Aorta (tissue), 5 donors: ENCODE measurements at regions of chr3 and their contacts with region 1.

Region 1: GRCh38 chr3:171566803-171567422 is 106.7 kb upstream of the TNIK start:
- DNase-seq: no peak
- ATAC-seq: peak; percentile 74
- H3K4me3 ChIP-seq: no peak overlapping the region
- H3K27ac ChIP-seq: no peak overlapping the region
- H3K4me1 ChIP-seq: no peaks in the 10 kb centered on the region
- H3K27me3 ChIP-seq: no peaks in the 10 kb centered on the region

Region 2: DNA sequence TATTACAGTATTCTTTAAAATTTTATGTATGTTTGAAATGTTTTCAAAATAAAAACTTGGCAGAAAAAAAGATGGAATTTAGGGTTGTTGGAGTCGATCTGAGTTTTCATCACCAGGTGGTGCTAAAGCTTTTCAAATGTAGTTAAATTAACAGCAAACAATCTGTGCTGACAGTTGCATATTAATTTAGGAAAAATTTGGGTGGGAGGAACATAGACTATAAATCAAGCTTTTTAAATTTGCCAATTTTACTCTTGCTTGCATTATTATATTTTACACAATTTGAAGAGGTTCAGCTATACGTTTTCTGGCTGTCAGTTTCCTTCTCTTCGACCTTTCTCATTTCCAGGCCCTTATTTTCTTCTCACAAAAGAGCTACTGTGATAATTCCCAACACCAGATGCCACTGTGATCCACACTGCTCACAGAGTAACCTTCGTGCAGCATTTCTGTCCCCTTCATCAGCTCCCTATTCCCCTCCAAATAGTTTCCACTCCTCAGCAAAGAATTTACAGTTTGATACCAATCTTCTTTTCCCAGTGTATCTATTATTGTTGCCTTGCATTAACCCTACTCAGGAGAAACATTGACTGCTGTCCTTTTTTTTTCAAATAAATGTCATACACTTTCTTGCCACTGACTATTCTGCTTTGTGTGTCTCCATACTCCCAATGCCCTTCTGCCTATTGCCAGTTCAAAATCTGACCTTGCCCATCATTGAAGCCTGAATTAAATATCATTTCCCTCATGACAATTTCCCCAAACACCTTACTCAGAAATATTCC is 605.1 kb before region 1 on chr3:
- intact Hi-C with region 1: loop called (anchors 2 kb)
- DNase-seq: no peak
- ATAC-seq: no peak
- H3K4me3 ChIP-seq: no peak overlapping the region
- H3K27ac ChIP-seq: no peak overlapping the region
- H3K4me1 ChIP-seq: no peaks in the 10 kb centered on the region
- H3K27me3 ChIP-seq: no peaks in the 10 kb centered on the region

Region 3: GRCh38 chr3:171049861-171050444 is 517.0 kb before region 1 on chr3:
- intact Hi-C with region 1: loop called (anchors 2 to 5 kb)
- DNase-seq: peak in 1 of 2 donors; percentile 54
- ATAC-seq: no peak
- H3K4me3 ChIP-seq: no peak overlapping the region
- H3K27ac ChIP-seq: no peak overlapping the region
- H3K4me1 ChIP-seq: no peaks in the 10 kb centered on the region
- H3K27me3 ChIP-seq: no peaks in the 10 kb centered on the region

Region 4: GRCh38 chr3:171162986-171163723 is 403.8 kb before region 1 on chr3:
- intact Hi-C with region 1: loop called (anchors 5 kb)
- DNase-seq: no peak
- ATAC-seq: no peak
- H3K4me3 ChIP-seq: no peak overlapping the region
- H3K27ac ChIP-seq: no peak overlapping the region
- H3K4me1 ChIP-seq: no peaks in the 10 kb centered on the region
- H3K27me3 ChIP-seq: no peaks in the 10 kb centered on the region

Region 5: DNA sequence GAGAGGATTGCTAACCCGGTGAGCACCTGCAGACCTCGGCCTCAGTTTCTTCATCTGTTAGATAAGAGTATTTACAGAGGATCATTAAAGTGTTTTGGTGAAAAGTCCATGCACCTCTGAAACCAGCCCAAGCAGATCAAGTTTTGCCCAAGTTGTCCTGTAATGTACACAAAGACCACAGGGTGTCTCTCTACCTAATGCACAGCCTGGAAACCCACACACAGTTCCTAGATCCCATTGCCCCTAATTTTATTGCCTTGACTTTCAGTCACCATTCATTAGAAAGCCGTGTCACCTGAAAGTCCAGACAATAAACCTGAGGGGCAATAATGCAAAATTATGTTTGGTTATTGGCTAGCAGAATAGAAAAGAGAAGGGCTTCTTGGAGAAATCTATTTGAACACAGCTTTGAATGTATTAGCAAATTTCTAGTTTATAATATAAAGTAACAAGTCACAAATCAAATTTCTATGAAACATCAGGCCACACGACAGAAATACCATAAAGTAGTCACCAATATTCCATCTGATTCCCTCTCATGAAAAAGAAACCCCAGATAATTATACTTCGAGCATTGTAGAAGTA is 379.1 kb before region 1 on chr3:
- intact Hi-C with region 1: loop called in 1 of 2 experiments (anchors 5 kb)
- DNase-seq: no peak
- ATAC-seq: peak; percentile 63
- H3K4me3 ChIP-seq: no peak overlapping the region
- H3K27ac ChIP-seq: no peak overlapping the region
- H3K4me1 ChIP-seq: peaks cover 0 to 5% of the 10 kb centered on the region in 2 donors
- H3K27me3 ChIP-seq: no peaks in the 10 kb centered on the region